ENCODE measurements at regions of chr1 and their contacts with region 1.

Region 1: GRCh38 chr1:112715264-112716053 is at the start of gene PPM1J:
- DNase-seq: peak; percentile 99
- total RNA-seq, gene PPM1J: 10.7 TPM

Region 2: DNA sequence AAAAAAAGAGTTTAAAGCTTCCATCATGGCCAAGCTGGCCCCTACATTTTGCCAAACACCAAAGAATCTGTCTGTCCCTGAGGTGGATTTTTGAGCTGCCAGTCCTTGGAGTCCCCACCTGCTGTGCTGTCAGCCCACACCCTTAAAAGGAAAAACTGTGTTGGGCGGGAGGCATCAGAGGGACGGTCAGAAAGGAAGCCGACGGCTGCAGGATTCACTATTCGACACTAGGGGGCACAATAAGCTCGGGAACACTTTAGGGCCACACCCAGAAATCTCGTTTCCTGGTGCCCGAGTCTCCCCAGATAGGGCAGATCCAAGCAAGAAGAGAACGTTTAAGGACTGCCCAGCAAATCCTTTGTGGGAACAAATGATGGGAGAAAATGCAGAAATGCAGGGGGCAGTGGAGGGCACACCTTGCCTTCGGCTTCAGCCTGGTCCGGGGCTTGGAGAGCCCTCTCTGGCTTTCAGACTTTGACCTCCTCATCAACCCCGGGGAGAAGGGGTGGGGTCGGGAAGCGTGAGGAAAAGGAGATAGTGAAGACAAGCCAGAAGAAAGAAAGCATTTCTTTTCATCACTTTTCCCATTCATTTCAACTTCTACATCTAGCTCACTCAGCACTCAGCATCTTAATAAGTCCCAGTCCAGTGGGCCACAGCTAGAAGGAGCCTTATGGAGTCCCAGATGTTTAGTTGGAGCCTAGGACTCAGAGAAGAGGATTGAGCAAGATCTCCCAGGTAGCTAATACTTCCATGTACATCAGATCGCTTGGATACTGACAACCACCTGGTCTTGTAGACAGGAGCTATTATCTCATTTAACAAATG is 324.5 kb before region 1 on chr1:
- intact Hi-C with region 1: loop called (anchors 2 kb)
- DNase-seq: peak; percentile 92

Region 3: GRCh38 chr1:112744009-112744578 is 28.6 kb after region 1 on chr1:
- intact Hi-C with region 1: no loop called
- DNase-seq: no peak

Region 4: DNA sequence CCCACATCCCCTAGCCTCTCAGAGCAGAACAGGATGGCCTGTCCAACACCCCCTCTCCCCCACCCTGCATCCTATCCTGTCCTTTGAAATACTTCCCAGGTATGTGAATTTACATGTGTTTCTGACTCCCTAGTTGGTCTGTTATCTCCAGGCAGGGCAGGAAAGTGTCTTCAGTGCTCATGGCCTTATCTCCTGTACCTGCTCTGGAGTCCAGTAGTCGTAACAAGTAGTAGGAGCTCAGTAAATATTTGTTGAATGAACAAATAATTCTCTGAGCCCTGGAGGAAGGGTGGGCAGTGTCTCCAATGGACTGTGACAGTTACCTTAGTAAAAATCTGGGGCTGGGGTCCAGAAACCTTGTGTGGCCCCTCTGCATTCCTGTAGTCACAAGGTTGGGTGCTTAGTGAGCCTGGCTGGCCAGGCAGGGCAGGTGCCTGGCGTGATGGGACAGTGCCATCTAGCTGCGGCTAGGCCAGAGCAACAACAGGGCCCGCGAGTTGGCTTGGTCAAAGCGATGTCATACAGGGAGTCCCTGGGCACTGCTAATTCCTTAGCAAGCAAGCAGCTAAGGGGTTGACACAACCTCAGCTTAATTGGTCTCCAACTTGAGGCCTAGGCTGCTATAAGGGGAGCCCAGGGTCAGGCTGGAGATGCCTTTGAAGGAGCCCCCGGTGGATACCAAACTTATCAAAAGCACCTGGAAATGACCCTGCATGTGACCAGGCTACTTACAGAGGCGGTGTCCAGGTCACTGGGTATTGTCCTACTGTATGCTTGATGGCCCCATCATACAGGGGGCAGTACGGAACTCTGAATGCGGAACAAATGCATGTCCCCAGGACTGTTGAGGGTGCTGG is 88.7 kb after region 1 on chr1:
- intact Hi-C with region 1: loop called (anchors 1 kb)
- DNase-seq: no peak

Region 5: DNA sequence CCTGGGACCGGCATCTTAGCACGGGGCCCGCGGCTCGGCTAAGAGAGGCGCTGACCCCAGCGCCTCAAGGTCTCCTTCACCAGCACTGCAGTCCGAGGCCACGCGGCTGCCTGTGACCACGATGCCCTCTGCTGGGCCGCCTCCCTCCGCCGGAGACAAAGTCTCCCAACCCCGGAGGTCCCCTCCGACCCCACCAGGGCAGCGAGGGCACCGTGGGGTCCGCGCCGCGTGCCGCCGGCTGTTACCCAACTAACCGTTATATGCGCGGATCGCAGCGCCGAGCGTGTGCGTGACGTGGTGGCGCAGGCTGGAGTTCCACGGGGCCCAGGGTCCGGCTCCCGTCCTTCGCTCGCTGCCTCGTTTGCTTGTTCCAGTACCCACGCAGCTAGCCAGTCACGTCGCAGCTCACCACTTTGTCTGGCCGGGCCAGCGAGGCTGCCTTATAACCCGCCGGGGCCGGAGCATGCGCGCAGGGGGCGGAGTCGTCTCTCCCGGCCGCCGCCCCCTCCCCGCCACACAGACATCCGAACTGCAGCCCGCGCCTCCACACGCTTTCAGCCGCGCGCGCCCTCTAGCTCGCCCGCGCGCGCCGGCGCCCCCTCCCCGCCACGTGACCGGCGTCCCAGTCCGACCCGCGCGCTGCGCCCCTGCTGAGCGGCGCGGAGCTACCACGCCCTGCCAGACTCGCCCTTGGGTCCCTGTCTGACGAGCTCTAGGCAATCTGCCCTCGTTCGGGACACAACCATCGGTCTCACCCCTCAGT is 240.5 kb after region 1 on chr1 and contains the start of gene SLC16A1:
- intact Hi-C with region 1: loop called (anchors 5 kb)
- DNase-seq: peak; percentile 96
- total RNA-seq, gene SLC16A1: 119 TPM

Region 6: GRCh38 chr1:113072757-113073478 is 357.5 kb after region 1 on chr1 and contains the start of gene LRIG2:
- intact Hi-C with region 1: loop called (anchors 2 kb)
- DNase-seq: peak; percentile 99
- total RNA-seq, gene LRIG2: 11.5 TPM

Measured in cardiac septum (tissue), 1 donor.